ENCODE measurements at regions of chr7 and their contacts with region 1.

Region 1: DNA sequence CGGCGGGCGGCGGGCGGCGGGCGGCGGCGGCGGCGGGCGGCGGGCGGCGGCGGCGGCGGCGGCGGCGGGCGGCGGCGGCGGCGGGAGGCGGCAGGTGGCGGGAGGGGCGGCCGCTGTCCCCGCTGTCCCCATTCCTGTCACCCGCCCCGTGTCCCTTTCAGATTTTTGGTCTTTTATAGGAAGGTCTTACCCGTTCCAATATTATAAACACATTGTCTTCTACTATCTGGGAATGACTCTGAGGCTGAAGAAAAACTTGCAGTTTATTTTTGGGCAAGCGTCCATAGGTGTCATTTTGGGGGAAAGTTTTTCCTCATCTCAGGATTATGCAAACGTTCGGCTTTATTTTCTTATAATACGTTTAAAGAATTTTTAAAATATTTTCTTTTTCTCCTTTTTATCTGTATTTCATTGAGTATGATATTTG is 578 bp downstream of the ZNF713 start:
- DNase-seq: no peak

Region 2: DNA sequence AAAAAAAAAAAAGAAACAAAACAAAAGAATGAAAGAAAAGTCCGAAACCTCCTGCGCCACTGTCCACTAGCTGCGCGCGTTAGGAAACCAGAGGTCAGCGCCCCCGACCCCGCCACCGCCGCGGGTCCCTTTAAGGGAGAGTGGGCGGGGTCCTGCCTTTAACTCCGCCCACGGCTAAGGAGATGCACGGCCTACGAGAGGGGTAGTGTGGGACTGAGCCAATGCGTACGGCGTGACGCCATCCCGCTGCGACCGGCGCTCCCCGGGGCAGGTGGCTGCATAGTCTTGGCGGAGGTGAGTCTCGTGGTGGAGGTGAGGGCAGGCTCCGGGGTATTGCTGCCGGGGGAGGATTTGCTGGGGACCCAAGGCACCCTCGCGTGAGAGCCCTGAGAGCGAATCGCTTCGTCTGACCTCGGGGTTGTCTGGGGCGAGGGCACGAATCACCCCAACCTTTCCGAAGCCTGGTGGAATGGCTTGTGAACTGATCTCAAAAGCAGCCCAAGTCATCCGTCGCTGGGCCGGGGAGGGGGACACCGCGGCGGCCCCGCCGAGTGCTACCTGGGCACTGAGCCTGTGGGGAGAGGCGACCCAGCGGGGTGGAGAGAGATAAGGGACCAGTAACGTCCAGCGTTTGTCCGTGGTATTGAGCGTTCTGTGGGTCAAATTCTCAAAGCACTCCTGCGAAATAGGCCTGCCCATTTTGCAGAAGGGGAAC is 64.0 kb after region 1 on chr7 and contains the start of gene MRPS17:
- intact Hi-C with region 1: loop called in 1 of 2 experiments (anchors 10 kb)
- DNase-seq: peak; percentile 97
- total RNA-seq, gene MRPS17: 10.5 to 13.4 TPM

Measured in posterior vena cava (tissue), 2 donors.